Heart right ventricle (tissue), 16 donors: ENCODE measurements at regions of chr1 and their contacts with region 1.

Region 1: DNA sequence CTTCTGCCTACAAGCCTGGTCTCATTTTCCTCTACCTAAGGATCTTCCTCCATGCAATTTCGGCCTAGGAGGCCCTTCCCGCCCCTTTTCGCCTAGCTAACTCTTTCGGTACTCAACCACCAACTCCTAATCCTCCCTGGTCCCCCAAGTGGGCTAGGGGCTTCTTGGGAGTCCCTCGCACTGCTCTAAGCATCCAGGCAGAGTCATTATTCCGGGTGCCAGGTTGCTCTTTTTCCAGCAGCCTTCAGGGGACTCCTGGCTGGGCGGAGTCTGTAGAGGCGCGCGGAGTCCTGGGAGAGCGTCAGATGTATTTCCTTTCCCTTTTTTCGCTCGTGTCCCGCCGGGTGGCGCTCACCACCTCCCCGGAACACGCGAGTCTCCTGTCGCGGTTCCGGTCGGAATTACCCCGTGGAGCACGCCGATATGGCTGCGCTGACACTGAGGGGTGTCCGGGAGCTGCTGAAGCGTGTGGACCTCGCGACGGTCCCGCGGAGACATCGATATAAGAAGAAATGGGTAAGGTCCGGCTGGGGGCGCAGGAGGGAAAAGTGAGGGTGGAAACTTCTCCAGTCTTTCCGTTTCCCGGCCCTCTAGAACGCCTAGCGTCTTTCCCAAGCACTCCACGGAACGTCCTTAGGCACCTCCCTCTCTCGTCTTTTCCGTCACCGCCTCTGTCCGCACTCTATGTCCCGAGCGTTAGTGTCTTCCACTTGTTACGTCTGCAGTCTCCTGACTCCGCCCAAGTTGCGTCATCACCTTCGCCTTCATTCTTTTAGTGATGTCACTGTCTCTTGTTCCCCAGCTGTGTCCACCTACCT is at the start of gene NSUN4:
- DNase-seq: peak; percentile 90 to 93
- ATAC-seq: peak; percentile 93 to 98 (median 95)
- H3K4me3 ChIP-seq: peak within 1 kb of the TSS; percentile 40 to 91 (median 66)
- H3K27ac ChIP-seq: peak within 1 kb of the TSS; percentile 86 to 99 (median 96)
- H3K4me1 ChIP-seq: peaks cover 0 to 35% (median 21%) of the 10 kb centered on the region in 9 donors
- H3K27me3 ChIP-seq: no peaks in the 10 kb centered on the region
- CTCF ChIP-seq: peak; percentile 15 to 86 (median 68)
- total RNA-seq, gene NSUN4: 12.5 to 18.7 (median 16.5) TPM

Region 2: DNA sequence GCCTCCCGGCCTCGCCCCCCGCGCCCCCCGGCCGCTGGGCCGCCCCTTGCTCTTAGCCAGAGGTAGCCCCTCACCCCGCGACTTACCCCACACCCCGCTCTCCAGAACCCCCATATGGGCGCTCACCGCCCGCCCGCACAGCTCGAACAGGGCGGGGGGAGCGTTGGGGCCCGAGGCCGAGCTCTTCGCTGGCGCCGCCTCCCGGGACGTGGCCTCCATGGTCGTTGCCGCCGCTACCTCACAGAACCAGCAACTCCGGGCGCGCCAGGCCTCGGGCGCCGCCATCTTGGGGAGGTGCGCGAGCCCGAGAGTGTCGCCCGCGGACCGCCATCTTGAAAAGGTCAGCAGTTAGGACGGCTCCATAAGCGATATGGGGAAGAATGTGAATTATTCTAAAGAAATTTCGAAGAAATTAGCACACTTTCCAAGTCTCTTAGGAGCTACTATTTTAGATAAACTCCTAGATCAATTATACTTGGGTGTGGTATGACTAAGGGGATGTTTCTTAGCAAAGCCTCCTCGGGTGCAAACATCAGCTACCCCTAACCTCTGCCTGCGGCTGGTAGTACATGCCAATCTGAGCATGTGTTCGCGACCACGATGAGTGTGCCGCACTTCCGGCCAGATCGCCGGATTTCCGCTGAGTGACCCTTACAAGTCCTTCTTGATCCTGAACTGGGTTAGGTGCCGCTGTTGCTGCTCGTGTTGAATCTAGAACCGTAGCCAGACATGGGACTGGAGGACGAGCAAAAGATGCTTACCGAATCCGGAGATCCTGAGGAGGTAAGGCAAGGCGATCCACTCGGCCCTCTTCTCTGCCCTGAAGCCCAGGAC is 37.4 kb before region 1 on chr1 and contains the starts of genes LRRC41 and UQCRH:
- intact Hi-C with region 1: loop called in 7 of 10 experiments (anchors 2 to 5 kb)
- DNase-seq: peak; percentile 93 to 96
- ATAC-seq: peak; percentile 91 to 96 (median 92)
- H3K4me3 ChIP-seq: peak within 1 kb of the TSS; percentile 76 to 98 (median 90)
- H3K27ac ChIP-seq: peak within 1 kb of the TSS; percentile 95 to 99 (median 98)
- H3K4me1 ChIP-seq: peaks cover 13 to 76% (median 69%) of the 10 kb centered on the region in 9 donors
- H3K27me3 ChIP-seq: no peaks in the 10 kb centered on the region
- CTCF ChIP-seq: peak in 1 of 9 donors; percentile 27
- total RNA-seq, gene LRRC41: 36.7 to 52.5 (median 43.6) TPM
- total RNA-seq, gene UQCRH: 759 to 1,195 (median 1,005) TPM